AG04450 (cell line): ENCODE measurements at regions of chr11 and their contacts with region 1.

Region 1: GRCh38 chr11:124586238-124586860 is 16.6 kb downstream of the OR8A1 start:
- DNase-seq: peak; percentile 23
- H3K4me3 ChIP-seq: no peak overlapping the region
- H3K27ac ChIP-seq: no peak overlapping the region
- H3K27me3 ChIP-seq: peaks cover 10% of the 10 kb centered on the region
- CTCF ChIP-seq: peak; percentile 74

Region 2: DNA sequence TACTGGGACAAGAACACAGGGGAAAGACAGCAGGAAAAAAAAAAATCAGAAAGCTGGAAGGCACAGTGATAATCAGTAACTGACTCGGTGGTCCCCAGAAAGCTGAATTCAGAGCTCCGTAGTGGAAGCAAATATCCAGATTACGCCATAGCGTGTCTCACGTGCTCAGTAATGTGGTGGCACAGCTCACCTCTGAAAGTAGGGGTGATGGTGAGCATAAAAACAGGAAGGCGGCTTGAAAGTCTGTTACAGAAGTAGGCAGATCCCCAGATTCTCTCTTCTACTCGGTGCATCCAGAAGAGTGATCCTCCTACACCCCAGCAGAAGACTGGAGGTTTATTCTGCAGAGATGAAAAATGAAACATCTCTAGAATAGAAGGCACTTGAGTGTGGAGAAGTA is 176.4 kb before region 1 on chr11:
- CTCF ChIA-PET with region 1: interaction called, 117 read pairs
- POLR2A ChIA-PET with region 1: no interaction called
- DNase-seq: no peak
- H3K4me3 ChIP-seq: no peak overlapping the region
- H3K27ac ChIP-seq: no peak overlapping the region
- H3K27me3 ChIP-seq: no peaks in the 10 kb centered on the region
- CTCF ChIP-seq: no peak

Region 3: DNA sequence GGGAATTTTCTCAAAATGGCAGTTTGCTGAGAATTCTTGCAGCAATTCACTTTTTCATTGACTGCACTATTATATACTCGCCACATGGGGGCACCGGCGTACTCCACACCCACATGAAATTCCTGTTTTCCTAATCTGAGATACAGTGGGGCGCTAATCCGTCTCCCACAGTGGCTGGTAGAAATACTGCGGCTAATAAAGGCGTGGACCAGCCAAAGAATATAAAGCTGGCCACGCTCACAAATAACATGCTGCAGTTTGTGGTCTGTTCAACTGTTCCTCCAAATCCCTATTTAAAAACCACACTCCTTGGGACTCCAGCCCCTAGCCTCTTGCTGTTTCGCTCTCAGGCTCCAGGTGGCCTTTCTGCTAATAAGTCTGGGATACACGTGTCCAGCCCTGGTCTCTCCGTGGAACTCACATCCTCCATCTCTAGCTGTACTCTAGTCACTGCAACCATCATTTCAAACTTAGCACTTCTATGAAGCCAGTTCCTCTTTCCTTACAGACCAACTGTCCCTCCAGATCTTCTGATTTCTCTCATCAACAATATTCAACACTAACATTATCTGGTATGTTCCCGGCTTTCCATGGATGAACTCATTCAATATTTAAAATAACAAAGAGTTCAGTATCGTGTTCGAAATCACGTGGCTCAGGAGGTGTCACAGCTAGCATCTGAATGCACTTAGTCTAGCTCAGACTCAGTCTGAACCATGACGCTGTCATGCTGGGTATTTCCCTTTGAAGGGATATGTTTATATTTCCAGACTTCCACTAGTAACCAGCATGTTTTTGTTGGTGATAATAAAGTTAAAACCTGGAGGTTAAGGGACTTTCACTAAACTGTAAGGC is 58.3 kb after region 1 on chr11:
- CTCF ChIA-PET with region 1: no interaction called
- POLR2A ChIA-PET with region 1: no interaction called
- DNase-seq: no peak
- H3K4me3 ChIP-seq: no peak overlapping the region; the same call in 1 of the 2 replicates
- H3K27ac ChIP-seq: peak overlapping the region; percentile 40
- H3K27me3 ChIP-seq: no peaks in the 10 kb centered on the region
- CTCF ChIP-seq: peak; percentile 78